Activated CD4-positive, alpha-beta T cell treated with anti-CD3 and anti-CD28 coated beads, Interleukin-2, amount 10 ng/mL, durations not matched to agents 24 days and 14 days (primary cell): ENCODE measurements at regions of chr4 and their contacts with region 1.

Region 1: GRCh38 chr4:37603070-37603468 is 83.1 kb downstream of the RELL1 start:
- DNase-seq: peak; percentile 93
- H3K4me3 Mint-ChIP-seq: peak overlapping the region; percentile 4
- H3K27ac Mint-ChIP-seq: peak overlapping the region; percentile 35
- H3K4me1 Mint-ChIP-seq: peaks cover 20% of the 10 kb centered on the region
- H3K27me3 Mint-ChIP-seq: no peaks in the 10 kb centered on the region

Region 2: GRCh38 chr4:37693450-37694190 is 90.6 kb after region 1 on chr4:
- intact Hi-C with region 1: no loop called
- DNase-seq: no peak
- H3K4me3 Mint-ChIP-seq: no peak overlapping the region
- H3K27ac Mint-ChIP-seq: no peak overlapping the region
- H3K4me1 Mint-ChIP-seq: no peaks in the 10 kb centered on the region
- H3K27me3 Mint-ChIP-seq: peaks cover 17% of the 10 kb centered on the region

Region 3: GRCh38 chr4:37780444-37781150 is 177.5 kb after region 1 on chr4:
- intact Hi-C with region 1: loop called (anchors 5 kb)
- DNase-seq: peak; percentile 86
- H3K4me3 Mint-ChIP-seq: no peak overlapping the region
- H3K27ac Mint-ChIP-seq: peak overlapping the region; percentile 2
- H3K4me1 Mint-ChIP-seq: peaks cover 13% of the 10 kb centered on the region
- H3K27me3 Mint-ChIP-seq: no peaks in the 10 kb centered on the region

Region 4: GRCh38 chr4:37793562-37793961 is 190.5 kb after region 1 on chr4:
- intact Hi-C with region 1: loop called (anchors 1 kb)
- DNase-seq: peak; percentile 65
- H3K4me3 Mint-ChIP-seq: no peak overlapping the region
- H3K27ac Mint-ChIP-seq: no peak overlapping the region
- H3K4me1 Mint-ChIP-seq: no peaks in the 10 kb centered on the region
- H3K27me3 Mint-ChIP-seq: peaks cover 11% of the 10 kb centered on the region

Region 5: GRCh38 chr4:38034986-38035882 is 432.2 kb after region 1 on chr4:
- intact Hi-C with region 1: loop called (anchors 2 kb)
- DNase-seq: peak; percentile 82
- H3K4me3 Mint-ChIP-seq: no peak overlapping the region
- H3K27ac Mint-ChIP-seq: no peak overlapping the region
- H3K4me1 Mint-ChIP-seq: no peaks in the 10 kb centered on the region
- H3K27me3 Mint-ChIP-seq: no peaks in the 10 kb centered on the region